ENCODE measurements at regions of chr2 and their contacts with region 1.

Region 1: DNA sequence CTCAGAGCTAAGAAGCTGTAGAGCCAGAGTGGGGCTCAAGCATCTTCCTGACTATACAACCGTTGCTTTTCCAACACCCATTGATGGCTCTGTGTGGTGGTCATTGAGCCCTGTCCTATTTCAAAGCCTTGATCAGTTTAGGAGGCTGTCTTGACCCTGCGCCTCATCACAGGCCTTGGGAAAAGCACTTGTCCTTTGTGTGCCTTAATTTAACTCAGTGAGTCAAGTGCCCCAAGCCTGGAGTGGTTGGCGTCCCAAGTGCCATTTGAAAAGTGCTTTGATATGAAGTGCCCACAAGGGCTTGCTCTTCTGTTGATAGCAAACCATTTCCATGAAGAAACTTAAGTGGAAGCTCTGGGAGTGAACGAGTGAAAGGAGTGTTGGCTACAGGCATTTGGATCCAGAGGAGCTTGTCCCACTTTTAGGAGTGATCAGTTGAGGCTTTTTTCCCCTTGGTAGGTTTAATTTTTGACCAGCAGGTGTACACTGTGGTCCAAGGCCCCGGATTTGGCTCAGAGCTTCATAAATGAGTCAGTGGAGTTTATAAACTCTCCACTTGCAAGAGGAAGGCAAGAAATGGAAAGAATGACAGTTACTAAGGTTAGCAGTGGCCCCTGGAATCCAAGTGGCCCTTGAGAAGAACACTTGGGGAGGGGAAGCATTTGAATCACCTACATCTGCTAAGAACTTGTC is 50.3 kb downstream of the ACTR2 start:
- DNase-seq: peak; percentile 19
- ATAC-seq: no peak
- H3K4me3 Mint-ChIP-seq: no peak overlapping the region
- H3K27ac Mint-ChIP-seq: no peak overlapping the region
- H3K4me1 Mint-ChIP-seq: peaks cover 15% of the 10 kb centered on the region
- H3K27me3 Mint-ChIP-seq: peaks cover 2% of the 10 kb centered on the region

Region 2: GRCh38 chr2:65264821-65265670 is 12.9 kb before region 1 on chr2:
- CTCF ChIA-PET with region 1: interaction called, 14 read pairs
- POLR2A ChIA-PET with region 1: no interaction called
- DNase-seq: peak; percentile 25
- ATAC-seq: no peak
- H3K4me3 Mint-ChIP-seq: no peak overlapping the region
- H3K27ac Mint-ChIP-seq: no peak overlapping the region
- H3K4me1 Mint-ChIP-seq: peaks cover 7% of the 10 kb centered on the region
- H3K27me3 Mint-ChIP-seq: no peaks in the 10 kb centered on the region

Measured in activated CD8-positive, alpha-beta T cell treated with anti-CD3 and anti-CD28 coated beads, Interleukin-2, amount 10 ng/mL, durations not matched to agents 7 days and 5 days (primary cell).